ENCODE measurements at regions of chr7 and their contacts with region 1.

Region 1: DNA sequence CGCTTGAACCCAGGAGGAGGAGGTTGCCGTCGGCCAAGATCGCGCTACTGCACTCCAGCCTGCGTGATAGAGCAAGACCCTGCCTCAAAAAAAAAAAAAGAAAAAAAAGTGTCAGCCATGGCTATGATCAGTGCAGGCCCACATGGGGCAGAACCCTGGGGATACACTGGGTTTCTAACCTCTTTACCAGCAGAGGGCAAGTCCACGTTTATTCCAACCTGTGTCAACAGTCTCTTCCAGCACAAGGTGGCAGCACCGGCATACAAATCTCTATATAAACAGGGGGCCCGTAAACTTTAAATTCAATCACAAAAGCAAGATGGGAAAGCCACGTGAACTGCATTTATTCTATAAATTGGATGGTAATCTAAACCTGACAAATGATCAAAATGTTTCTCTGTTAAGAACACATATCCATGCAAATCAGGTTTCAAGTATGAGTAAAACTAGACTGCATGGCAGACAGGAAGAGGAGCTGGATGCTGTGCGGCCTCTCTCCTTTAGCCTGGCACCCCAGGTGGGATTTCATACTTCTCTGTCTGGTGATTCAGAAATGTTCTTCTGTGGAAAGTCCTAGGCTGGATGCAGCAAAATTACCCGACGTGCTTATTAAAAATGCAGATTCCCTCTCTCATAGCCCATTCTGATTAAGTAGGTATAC is 60.0 kb upstream of the STEAP1B start:
- DNase-seq: peak; percentile 93

Region 2: GRCh38 chr7:22726345-22727185 is 166.6 kb after region 1 on chr7:
- in situ Hi-C with region 1: loop called (anchors 25 kb)
- DNase-seq: peak; percentile 99